ENCODE measurements at regions of chr9 and their contacts with region 1.

Region 1: GRCh38 chr9:115013998-115014397 is 83.6 kb upstream of the TNFSF8 start:
- DNase-seq: peak; percentile 89
- H3K4me3 ChIP-seq: no peak overlapping the region
- H3K27ac ChIP-seq: no peak overlapping the region
- H3K4me1 ChIP-seq: peaks cover 0 to 52% (median 37%) of the 10 kb centered on the region in 4 donors
- H3K27me3 ChIP-seq: no peaks in the 10 kb centered on the region
- CTCF ChIP-seq: peak; percentile 66 to 81 (median 76)
- EP300 ChIP-seq: no peak
- POLR2A ChIP-seq: no peak

Region 2: DNA sequence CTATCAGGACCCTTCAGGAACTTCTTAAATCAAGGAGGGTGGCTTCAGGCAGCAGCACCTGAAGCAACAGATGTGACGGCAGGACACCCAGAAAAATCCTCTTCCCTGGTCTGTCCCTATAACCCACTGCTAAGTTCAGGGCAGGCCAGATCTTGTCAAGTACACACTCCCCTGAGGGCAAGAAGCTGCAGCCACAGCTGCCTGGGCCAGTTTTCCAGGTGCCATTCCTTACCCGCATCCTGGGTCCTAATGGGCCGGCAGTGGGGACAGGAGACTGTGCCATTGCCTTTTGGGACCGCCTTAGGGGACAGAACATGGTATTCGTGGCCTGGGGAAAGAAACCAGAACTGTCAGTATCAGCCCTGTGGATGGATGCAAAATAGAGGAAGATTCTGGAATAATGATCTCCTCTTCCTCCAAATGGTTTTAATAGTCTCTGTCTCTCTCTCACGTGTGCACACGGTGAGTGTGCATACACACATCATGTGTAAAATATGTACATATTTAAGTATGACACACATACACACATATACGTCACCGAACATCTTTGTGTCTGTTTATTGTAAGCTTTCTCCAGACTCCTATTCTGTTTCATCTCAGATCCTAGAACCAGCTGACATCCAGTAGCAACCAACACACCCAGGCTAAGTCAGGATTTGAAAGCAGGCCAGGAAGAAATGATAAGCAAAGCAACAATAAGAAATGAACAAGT is 670.4 kb before region 1 on chr9:
- intact Hi-C with region 1: loop called (anchors 5 kb)
- DNase-seq: no peak
- H3K4me3 ChIP-seq: no peak overlapping the region
- H3K27ac ChIP-seq: peak overlapping the region in 3 of 4 donors; percentile 74 to 87 (median 85)
- H3K4me1 ChIP-seq: peaks cover 0 to 42% (median 29%) of the 10 kb centered on the region in 4 donors
- H3K27me3 ChIP-seq: no peaks in the 10 kb centered on the region
- CTCF ChIP-seq: no peak
- EP300 ChIP-seq: peak; percentile 75 to 97 (median 90)
- POLR2A ChIP-seq: no peak

Region 3: GRCh38 chr9:114505187-114506081 is 508.6 kb before region 1 on chr9 and contains the start of gene WHRN:
- intact Hi-C with region 1: loop called (anchors 5 kb)
- DNase-seq: peak; percentile 98
- H3K4me3 ChIP-seq: peak within 1 kb of the TSS; percentile 57 to 86 (median 70)
- H3K27ac ChIP-seq: peak within 1 kb of the TSS; percentile 80 to 93 (median 88)
- H3K4me1 ChIP-seq: peaks cover 0 to 54% (median 32%) of the 10 kb centered on the region in 4 donors
- H3K27me3 ChIP-seq: no peaks in the 10 kb centered on the region
- CTCF ChIP-seq: no peak
- EP300 ChIP-seq: peak in 2 of 4 donors; percentile 49 to 65
- POLR2A ChIP-seq: peak; percentile 38 to 61
- total RNA-seq, gene WHRN: 4.6 to 7.8 (median 6.3) TPM

Region 4: GRCh38 chr9:114681594-114682332 is 332.2 kb before region 1 on chr9 and contains the start of gene TEX48:
- intact Hi-C with region 1: loop called (anchors 5 kb)
- DNase-seq: peak; percentile 71
- H3K4me3 ChIP-seq: no peak within 1 kb of the TSS
- H3K27ac ChIP-seq: no peak within 1 kb of the TSS
- H3K4me1 ChIP-seq: peaks cover 0 to 14% (median 10%) of the 10 kb centered on the region in 4 donors
- H3K27me3 ChIP-seq: no peaks in the 10 kb centered on the region
- CTCF ChIP-seq: peak in 3 of 4 experiments; percentile 35 to 45 (median 35)
- EP300 ChIP-seq: no peak
- POLR2A ChIP-seq: no peak
- total RNA-seq, gene TEX48: not detected

Region 5: DNA sequence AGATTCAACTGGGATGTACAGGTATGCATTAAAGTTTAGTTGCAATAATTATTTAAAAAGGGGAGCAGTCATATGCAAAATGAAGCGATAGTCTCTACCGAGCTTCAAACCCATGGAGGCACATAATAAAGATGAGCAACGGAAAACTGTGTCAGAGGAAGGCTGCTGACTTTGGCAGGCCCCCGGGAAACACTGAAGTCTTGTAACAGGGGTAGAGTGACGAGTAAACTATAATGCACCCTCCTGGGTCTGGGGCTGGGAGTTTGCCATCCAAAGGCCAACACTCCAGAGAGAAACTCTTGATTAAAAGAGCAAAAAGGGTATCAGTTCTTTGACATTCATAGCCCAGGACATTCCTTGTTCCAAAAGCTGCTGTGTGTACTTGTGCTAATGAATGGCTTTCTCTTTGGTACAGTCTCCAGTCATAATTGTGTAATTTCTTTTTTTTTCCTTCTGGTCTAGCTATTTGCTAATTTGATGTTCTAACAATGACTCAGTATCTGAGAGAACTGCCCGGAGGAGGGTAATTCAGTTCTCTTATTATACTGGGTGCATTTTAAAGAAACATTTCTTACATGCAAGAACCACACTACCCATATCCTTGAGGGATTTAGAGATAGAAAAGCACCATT is 44.8 kb after region 1 on chr9:
- intact Hi-C with region 1: no loop called
- DNase-seq: no peak
- H3K4me3 ChIP-seq: no peak overlapping the region
- H3K27ac ChIP-seq: peak overlapping the region; percentile 55 to 91 (median 85)
- H3K4me1 ChIP-seq: peaks cover 0 to 59% (median 30%) of the 10 kb centered on the region in 4 donors
- H3K27me3 ChIP-seq: no peaks in the 10 kb centered on the region
- CTCF ChIP-seq: no peak
- EP300 ChIP-seq: no peak
- POLR2A ChIP-seq: no peak

Region 6: GRCh38 chr9:115071176-115071575 is 57.2 kb after region 1 on chr9:
- intact Hi-C with region 1: no loop called
- DNase-seq: no peak
- H3K4me3 ChIP-seq: no peak overlapping the region
- H3K27ac ChIP-seq: peak overlapping the region in 3 of 4 donors; percentile 67 to 91 (median 72)
- H3K4me1 ChIP-seq: peaks cover 0 to 65% (median 57%) of the 10 kb centered on the region in 4 donors
- H3K27me3 ChIP-seq: no peaks in the 10 kb centered on the region
- CTCF ChIP-seq: no peak
- EP300 ChIP-seq: no peak
- POLR2A ChIP-seq: no peak

Region 7: DNA sequence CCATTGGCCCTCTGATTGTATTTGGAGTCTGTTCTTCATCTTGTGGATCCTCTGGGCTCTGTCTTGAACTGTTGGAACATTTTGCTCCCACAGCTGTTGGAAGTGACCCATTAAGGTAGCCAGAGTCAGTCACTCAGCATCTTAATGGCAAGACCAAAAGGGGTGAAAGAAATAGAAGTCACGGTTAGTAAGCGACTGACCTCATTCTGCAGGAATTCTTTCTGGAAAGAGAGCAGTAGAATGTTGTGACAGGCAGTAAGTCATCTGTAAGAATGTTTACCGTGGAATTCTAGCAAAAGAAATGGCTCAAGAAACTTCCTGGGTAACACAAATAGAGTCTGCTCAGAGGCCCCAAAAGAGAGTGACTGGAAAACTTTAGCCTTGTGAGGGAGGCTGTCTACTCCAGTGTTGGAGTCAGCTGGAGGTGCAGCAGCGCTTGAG is 132.6 kb after region 1 on chr9:
- intact Hi-C with region 1: loop called (anchors 5 kb)
- DNase-seq: peak; percentile 87
- H3K4me3 ChIP-seq: no peak overlapping the region
- H3K27ac ChIP-seq: peak overlapping the region; percentile 85 to 90 (median 88)
- H3K4me1 ChIP-seq: peaks cover 0 to 42% (median 38%) of the 10 kb centered on the region in 4 donors
- H3K27me3 ChIP-seq: no peaks in the 10 kb centered on the region
- CTCF ChIP-seq: no peak
- EP300 ChIP-seq: peak; percentile 85 to 99 (median 98)
- POLR2A ChIP-seq: no peak

Region 8: GRCh38 chr9:115262477-115262876 is 248.5 kb after region 1 on chr9:
- intact Hi-C with region 1: loop called (anchors 5 kb)
- DNase-seq: peak; percentile 95
- H3K4me3 ChIP-seq: no peak overlapping the region
- H3K27ac ChIP-seq: peak overlapping the region in 3 of 4 donors; percentile 65 to 74 (median 72)
- H3K4me1 ChIP-seq: peaks cover 0 to 42% (median 30%) of the 10 kb centered on the region in 4 donors
- H3K27me3 ChIP-seq: no peaks in the 10 kb centered on the region
- CTCF ChIP-seq: no peak
- EP300 ChIP-seq: peak; percentile 75 to 95 (median 88)
- POLR2A ChIP-seq: no peak

Region 9: GRCh38 chr9:115524453-115525059 is 510.6 kb after region 1 on chr9:
- intact Hi-C with region 1: loop called (anchors 2 kb)
- DNase-seq: no peak
- H3K4me3 ChIP-seq: no peak overlapping the region
- H3K27ac ChIP-seq: peak overlapping the region in 3 of 4 donors; percentile 71 to 79 (median 73)
- H3K4me1 ChIP-seq: peaks cover 0 to 58% (median 41%) of the 10 kb centered on the region in 4 donors
- H3K27me3 ChIP-seq: no peaks in the 10 kb centered on the region
- CTCF ChIP-seq: peak; percentile 66 to 86 (median 78)
- EP300 ChIP-seq: no peak
- POLR2A ChIP-seq: no peak

Measured in sigmoid colon (tissue), 7 donors.